Mammary epithelial cell (primary cell): ENCODE measurements at regions of chr7 and their contacts with region 1.

Region 1: GRCh38 chr7:65609131-65609530 is 235.5 kb downstream of the ZNF92 start:
- DNase-seq: no peak
- H3K4me3 ChIP-seq: no peak overlapping the region
- H3K27ac ChIP-seq: no peak overlapping the region
- H3K4me1 ChIP-seq: no peaks in the 10 kb centered on the region
- H3K27me3 ChIP-seq: no peaks in the 10 kb centered on the region
- CTCF ChIP-seq: no peak

Region 2: DNA sequence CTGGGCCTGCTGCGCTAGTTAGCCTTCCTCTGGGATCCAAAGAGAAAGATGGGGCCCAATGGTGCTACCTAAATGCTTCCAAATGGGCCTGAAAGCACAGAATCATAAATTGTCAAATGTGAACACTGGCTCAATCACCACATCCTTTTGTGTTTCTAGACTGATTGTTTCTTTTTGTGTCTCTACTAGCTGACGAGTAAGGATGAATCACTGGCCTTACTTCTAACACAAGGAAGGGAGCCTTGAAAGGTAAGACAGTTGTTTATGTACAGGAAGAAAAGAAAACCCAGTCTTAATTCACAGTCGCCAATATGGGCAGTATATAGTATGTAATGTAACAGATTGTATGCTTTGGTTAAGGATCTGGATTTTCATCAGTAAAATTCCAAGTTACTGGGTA is 145.9 kb before region 1 on chr7:
- CTCF ChIA-PET with region 1: no interaction called
- dilution Hi-C with region 1: no loop called
- in situ Hi-C with region 1: loop called in 1 of 2 experiments (anchors 25 kb)
- intact Hi-C with region 1: no loop called
- DNase-seq: peak; percentile 38
- H3K4me3 ChIP-seq: no peak overlapping the region
- H3K27ac ChIP-seq: no peak overlapping the region
- H3K4me1 ChIP-seq: peaks cover 3% of the 10 kb centered on the region
- H3K27me3 ChIP-seq: no peaks in the 10 kb centered on the region
- CTCF ChIP-seq: no peak

Region 3: DNA sequence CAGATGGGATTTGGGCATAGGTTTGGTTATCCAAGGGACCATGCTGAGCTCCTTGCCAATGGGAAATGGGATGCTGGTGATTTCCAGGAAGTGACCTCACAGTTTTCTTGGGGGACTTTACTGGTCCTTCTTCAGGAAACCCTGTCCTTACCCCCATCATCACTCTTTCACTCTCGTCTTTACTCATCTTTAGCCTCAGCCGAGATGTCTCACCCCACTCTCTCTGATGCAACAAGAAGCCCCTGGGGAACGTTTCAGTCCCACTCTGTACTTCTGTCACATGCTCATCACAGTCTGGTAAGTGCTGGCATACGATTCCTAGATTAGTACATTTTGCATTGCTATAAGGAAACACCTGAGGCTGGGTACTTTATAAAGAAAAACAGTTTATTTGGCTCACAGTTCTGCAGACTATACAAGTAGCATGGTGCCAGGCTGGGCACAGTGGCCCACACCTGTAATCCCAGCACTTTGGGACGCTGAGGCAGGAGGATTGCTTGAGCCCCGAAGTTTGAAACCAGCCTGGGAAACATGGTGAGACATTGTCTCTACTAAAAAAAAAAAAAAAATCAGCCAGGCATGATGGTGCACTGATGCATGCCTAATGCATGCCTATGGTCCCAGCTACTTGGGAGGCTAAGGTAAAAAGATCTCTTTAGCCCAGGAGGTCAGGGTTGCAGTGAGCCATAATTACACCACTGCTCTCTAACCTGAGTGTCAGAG is 200.3 kb after region 1 on chr7:
- CTCF ChIA-PET with region 1: no interaction called
- dilution Hi-C with region 1: no loop called
- in situ Hi-C with region 1: no loop called
- intact Hi-C with region 1: no loop called
- DNase-seq: no peak
- H3K4me3 ChIP-seq: no peak overlapping the region
- H3K27ac ChIP-seq: no peak overlapping the region
- H3K4me1 ChIP-seq: no peaks in the 10 kb centered on the region
- H3K27me3 ChIP-seq: no peaks in the 10 kb centered on the region
- CTCF ChIP-seq: no peak